H1 (cell line): ENCODE measurements at regions of chr16 and their contacts with region 1.

Region 1: DNA sequence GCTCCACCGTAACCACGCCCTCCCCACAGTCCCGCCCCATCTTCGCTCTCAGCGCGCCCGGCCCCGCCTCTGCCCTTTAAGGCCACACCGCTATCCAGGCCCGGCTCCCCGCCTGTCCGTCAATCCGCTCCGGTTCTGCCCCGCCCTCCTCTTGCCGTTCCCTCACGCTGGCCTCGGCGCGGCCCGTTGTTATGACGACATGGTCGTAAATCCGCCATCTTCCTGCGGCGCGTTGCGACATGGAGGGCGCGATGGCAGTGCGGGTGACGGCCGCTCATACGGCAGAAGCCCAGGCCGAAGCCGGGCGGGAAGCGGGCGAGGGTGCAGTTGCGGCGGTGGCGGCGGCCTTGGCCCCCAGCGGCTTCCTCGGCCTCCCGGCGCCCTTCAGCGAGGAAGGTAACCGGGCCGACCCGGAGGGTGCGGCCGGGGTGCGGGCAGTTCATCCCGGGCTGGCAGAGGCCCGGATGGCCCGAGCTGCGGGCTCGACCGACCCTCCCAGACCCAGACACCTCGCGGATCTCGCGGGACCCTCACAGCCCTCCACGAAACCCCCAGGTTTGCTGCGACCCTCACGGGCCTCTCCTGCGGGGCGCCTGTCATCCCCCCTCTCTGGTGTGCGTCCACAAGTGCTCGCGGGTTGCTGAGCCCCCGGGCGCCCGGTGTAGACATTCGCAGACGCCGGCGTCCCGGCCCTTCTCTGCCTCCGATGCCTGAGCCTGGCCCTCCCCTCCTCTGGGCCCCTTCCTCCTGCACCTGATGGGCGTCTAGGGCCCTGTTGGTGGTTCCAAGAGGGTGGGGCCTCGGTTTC is at the start of gene E4F1:
- DNase-seq: peak; percentile 99 to 100
- H3K4me3 ChIP-seq: peak within 1 kb of the TSS; percentile 67 to 93 (median 80)
- H3K27ac ChIP-seq: peak within 1 kb of the TSS; percentile 77
- H3K4me1 ChIP-seq: no peaks in the 10 kb centered on the region
- H3K27me3 ChIP-seq: no peaks in the 10 kb centered on the region
- CTCF ChIP-seq: peak in 1 of 3 experiments; percentile 14; a peak in 1 of 4 replicates
- EP300 ChIP-seq: peak in 1 of 2 experiments; percentile 48; a peak in 1 of 3 replicates
- POLR2A ChIP-seq: peak in 1 of 2 experiments; percentile 99; a peak in 2 of 3 replicates
- RAD21 ChIP-seq: no peak
- total RNA-seq, gene E4F1: 21.9 and 22.2 TPM in 2 replicates

Region 2: DNA sequence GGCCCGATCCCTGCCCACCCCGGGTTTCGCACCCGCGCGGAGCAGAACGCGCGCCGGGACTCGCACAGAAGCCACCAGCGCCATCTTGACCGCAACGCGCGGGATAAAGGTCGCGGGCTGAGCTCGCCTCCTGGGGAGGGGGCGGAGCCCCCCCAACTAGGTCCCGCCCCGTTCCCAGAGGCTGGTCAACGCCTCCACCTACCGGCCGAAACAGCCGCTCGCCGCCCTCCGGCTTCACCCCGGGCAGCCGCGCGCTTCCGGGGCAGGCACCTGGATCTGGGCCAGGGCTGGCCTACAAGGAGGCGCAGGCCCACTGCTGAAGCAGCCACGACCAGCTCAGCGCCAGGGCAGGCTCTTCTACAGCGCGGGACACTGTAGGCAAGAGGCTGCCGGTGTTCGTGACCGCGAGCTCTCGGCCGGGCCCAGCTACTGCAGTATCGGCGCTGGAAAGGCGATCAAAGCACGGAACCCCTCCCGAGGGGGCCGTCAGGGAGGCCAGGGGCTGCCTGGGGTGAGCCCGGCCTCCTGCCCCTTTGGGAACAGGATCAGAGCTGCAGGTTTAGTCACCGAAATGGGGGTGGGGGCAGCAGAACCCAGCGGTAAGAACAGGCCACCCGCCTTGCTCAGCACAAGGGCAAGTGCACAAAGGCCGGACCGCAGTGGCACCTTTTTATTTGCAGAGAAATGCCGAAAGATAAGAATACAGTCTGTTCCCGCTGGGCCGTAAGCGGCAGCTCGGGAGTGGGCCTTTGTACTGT is 28.1 kb after region 1 on chr16 and contains the start of gene ECI1:
- CTCF ChIA-PET with region 1: interaction called, 3 read pairs
- POLR2A ChIA-PET with region 1: interaction called, 34 read pairs
- DNase-seq: peak; percentile 84 to 96
- H3K4me3 ChIP-seq: peak within 1 kb of the TSS; percentile 76 to 95 (median 83)
- H3K27ac ChIP-seq: peak within 1 kb of the TSS; percentile 86
- H3K4me1 ChIP-seq: peaks cover 4 to 6% (median 5%) of the 10 kb centered on the region in 4 experiments; a peak in 6 of 7 replicates
- H3K27me3 ChIP-seq: no peaks in the 10 kb centered on the region
- CTCF ChIP-seq: peak; percentile 61 to 63 (median 63)
- EP300 ChIP-seq: peak in 1 of 2 experiments; percentile 77; a peak in 1 of 3 replicates
- POLR2A ChIP-seq: peak; percentile 89 to 90
- RAD21 ChIP-seq: peak; percentile 62 to 71; a peak in 3 of 4 replicates
- total RNA-seq, gene ECI1: 79.5 and 80.0 TPM in 2 replicates